PC-9 (cell line): ENCODE measurements at regions of chr5 and their contacts with region 1.

Region 1: DNA sequence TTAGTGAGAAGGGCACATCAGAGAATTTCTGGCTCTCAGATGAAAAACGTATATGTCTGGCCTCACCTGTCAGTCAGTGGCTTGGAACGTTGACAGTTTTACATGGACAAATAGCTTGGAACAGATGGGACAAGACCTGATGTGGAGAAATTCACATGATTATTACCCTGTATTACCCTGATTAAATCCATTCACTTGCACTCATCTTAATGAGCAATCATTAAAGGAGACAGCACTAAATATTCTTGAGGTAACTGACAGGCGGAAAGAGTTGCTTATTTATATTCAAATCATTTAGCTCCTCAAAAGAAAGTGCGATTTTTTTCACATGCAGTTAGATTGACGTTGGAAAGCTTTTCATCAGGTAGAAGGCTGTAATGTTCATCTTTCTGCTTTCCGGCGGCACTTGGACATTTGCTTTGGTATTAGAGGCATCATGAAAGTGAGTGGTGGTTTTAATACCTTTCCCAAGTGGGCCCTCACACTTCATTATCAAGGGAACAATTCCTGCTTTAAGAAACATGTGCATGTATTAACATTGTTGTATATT is 11.7 kb upstream of the TAS2R1 start:
- DNase-seq: no peak
- H3K4me3 ChIP-seq: no peak overlapping the region
- H3K27ac ChIP-seq: no peak overlapping the region
- H3K4me1 ChIP-seq: no peaks in the 10 kb centered on the region
- H3K27me3 ChIP-seq: no peaks in the 10 kb centered on the region
- CTCF ChIP-seq: no peak

Region 2: GRCh38 chr5:8538821-8539220 is 1103.1 kb before region 1 on chr5:
- CTCF ChIA-PET with region 1: no interaction called
- POLR2A ChIA-PET with region 1: interaction called, 11 read pairs
- intact Hi-C with region 1: no loop called
- DNase-seq: no peak
- H3K4me3 ChIP-seq: no peak overlapping the region
- H3K27ac ChIP-seq: no peak overlapping the region
- H3K4me1 ChIP-seq: no peaks in the 10 kb centered on the region
- H3K27me3 ChIP-seq: peaks cover 45% of the 10 kb centered on the region
- CTCF ChIP-seq: no peak

Region 3: DNA sequence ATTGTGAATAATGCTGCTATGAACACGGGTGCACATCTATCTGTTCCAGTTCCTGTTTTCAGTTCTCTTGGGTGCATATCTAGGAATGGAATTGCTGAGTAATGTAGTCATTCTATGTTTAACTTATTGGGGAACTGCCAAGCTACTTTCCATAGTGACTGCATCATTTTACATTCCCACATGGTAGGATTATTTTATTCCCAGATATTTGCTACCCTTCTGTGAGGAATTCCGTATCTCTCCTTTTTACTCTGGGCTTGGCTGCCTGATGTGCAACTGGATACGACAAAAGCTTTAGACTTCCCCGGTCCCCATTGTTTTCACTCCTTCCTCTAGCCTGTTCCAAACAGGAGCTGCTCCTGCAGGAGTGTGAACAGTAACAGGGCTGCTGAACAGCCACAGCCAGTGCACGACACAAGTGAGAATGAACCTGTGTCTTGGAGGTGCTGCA is 18.9 kb before region 1 on chr5:
- CTCF ChIA-PET with region 1: no interaction called
- POLR2A ChIA-PET with region 1: no interaction called
- intact Hi-C with region 1: no loop called
- DNase-seq: no peak
- H3K4me3 ChIP-seq: no peak overlapping the region
- H3K27ac ChIP-seq: no peak overlapping the region
- H3K4me1 ChIP-seq: peaks cover 15% of the 10 kb centered on the region
- H3K27me3 ChIP-seq: no peaks in the 10 kb centered on the region
- CTCF ChIP-seq: no peak

Region 4: GRCh38 chr5:9947225-9947714 is 305.4 kb after region 1 on chr5:
- CTCF ChIA-PET with region 1: no interaction called
- POLR2A ChIA-PET with region 1: no interaction called
- intact Hi-C with region 1: no loop called
- DNase-seq: peak in 1 of 2 experiments; percentile 84
- H3K4me3 ChIP-seq: no peak overlapping the region
- H3K27ac ChIP-seq: peak overlapping the region; percentile 55
- H3K4me1 ChIP-seq: peaks cover 15% of the 10 kb centered on the region
- H3K27me3 ChIP-seq: no peaks in the 10 kb centered on the region
- CTCF ChIP-seq: no peak